Heart right ventricle (tissue), 16 donors: ENCODE measurements at regions of chr1 and their contacts with region 1.

Region 1: GRCh38 chr1:169106095-169106920 is at the start of gene ATP1B1:
- DNase-seq: peak; percentile 80 to 89
- ATAC-seq: peak; percentile 76 to 91 (median 86)
- H3K4me3 ChIP-seq: peak within 1 kb of the TSS; percentile 66 to 98 (median 91)
- H3K27ac ChIP-seq: peak within 1 kb of the TSS; percentile 86 to 98 (median 94)
- H3K4me1 ChIP-seq: peaks cover 0 to 63% (median 28%) of the 10 kb centered on the region in 9 donors
- H3K27me3 ChIP-seq: peaks cover 0 to 12% (median 0%) of the 10 kb centered on the region in 7 donors
- CTCF ChIP-seq: peak; percentile 44 to 80 (median 66)
- total RNA-seq, gene ATP1B1: 245 to 472 (median 272) TPM

Region 2: GRCh38 chr1:168609133-168609715 is 497.1 kb before region 1 on chr1:
- intact Hi-C with region 1: loop called in 6 of 10 experiments (anchors 2 to 10 kb)
- DNase-seq: peak; percentile 27 to 50
- ATAC-seq: peak; percentile 39 to 70 (median 64)
- H3K4me3 ChIP-seq: peak overlapping the region in 1 of 10 donors; percentile 9
- H3K27ac ChIP-seq: peak overlapping the region in 7 of 10 donors; percentile 37 to 64 (median 44)
- H3K4me1 ChIP-seq: peaks cover 3 to 34% (median 23%) of the 10 kb centered on the region in 9 donors
- H3K27me3 ChIP-seq: no peaks in the 10 kb centered on the region
- CTCF ChIP-seq: no peak

Region 3: DNA sequence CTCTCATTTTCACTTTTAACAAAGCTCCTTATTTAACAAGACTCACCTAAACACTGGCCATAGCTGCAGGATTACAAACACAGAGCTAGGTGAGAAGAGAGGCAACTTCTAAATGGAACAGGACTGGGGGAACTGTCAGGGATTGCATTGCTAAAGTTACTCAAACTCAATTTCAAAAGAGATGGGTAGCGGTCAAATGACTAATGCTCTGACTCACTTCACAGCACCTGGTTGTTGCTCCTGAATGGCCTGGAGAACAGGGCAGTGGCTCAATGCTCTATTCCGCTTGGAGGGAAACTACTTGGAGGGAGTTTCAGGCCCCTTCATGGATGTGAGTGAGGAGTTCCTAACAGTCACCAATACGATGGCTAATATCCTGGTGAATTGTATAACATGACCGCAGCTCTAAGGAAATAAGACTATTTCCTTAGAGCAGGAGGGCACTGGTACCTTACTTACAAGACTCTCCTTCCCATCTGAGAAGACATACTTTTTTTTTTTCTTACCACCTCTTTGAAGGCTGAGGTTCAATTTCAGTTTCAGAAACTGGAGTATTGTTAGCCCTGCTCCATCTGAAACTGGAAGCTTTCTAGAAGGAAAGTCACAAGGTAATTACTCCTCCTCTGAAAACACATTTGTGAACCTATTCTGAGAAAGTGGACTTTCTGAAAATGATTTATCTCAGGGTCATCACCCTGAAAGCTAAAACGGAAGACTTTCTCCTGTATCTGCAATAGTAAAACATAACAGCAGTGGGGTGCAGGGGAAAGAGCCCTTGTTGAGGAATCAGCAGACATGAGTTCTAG is 386.8 kb before region 1 on chr1:
- intact Hi-C with region 1: loop called in 3 of 10 experiments (anchors 5 to 10 kb)
- DNase-seq: no peak
- ATAC-seq: no peak
- H3K4me3 ChIP-seq: no peak overlapping the region
- H3K27ac ChIP-seq: peak overlapping the region in 1 of 10 donors; percentile 28
- H3K4me1 ChIP-seq: peaks cover 0 to 35% (median 4%) of the 10 kb centered on the region in 9 donors
- H3K27me3 ChIP-seq: no peaks in the 10 kb centered on the region
- CTCF ChIP-seq: no peak

Region 4: DNA sequence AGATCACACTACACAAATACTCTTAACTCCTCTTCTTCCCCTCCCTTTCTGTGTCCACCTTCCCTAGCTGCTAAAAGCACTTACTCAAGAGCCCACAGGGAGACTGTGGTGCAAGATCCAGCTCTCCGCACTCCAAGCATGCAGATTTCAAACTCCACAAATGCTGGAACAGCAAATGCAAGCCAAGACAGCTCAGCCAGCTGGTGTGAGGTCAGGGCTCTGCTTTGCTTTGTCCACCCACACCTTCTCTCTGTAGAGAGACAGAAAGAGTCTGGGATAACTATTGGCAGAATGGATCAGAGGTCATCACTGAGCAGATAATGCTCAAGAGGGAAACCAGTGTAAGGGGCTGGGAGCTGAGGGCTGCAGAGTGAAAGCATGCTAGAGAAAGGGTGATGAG is 332.1 kb before region 1 on chr1:
- intact Hi-C with region 1: loop called in 1 of 10 experiments (anchors 5 kb)
- DNase-seq: peak; percentile 56
- ATAC-seq: peak; percentile 93 to 100 (median 97)
- H3K4me3 ChIP-seq: no peak overlapping the region
- H3K27ac ChIP-seq: peak overlapping the region in 3 of 10 donors; percentile 0 to 30 (median 22)
- H3K4me1 ChIP-seq: peaks cover 0 to 25% (median 5%) of the 10 kb centered on the region in 9 donors
- H3K27me3 ChIP-seq: no peaks in the 10 kb centered on the region
- CTCF ChIP-seq: no peak

Region 5: GRCh38 chr1:168893359-168893801 is 212.9 kb before region 1 on chr1:
- intact Hi-C with region 1: loop called in 1 of 10 experiments (anchors 10 kb)
- DNase-seq: peak in 1 of 2 donors; percentile 13
- ATAC-seq: peak; percentile 85 to 98 (median 94)
- H3K4me3 ChIP-seq: no peak overlapping the region
- H3K27ac ChIP-seq: peak overlapping the region in 9 of 10 donors; percentile 18 to 79 (median 60)
- H3K4me1 ChIP-seq: peaks cover 0 to 12% (median 0%) of the 10 kb centered on the region in 9 donors
- H3K27me3 ChIP-seq: no peaks in the 10 kb centered on the region
- CTCF ChIP-seq: no peak

Region 6: GRCh38 chr1:169031566-169032201 is 74.6 kb before region 1 on chr1:
- intact Hi-C with region 1: no loop called
- DNase-seq: no peak
- ATAC-seq: no peak
- H3K4me3 ChIP-seq: no peak overlapping the region
- H3K27ac ChIP-seq: no peak overlapping the region
- H3K4me1 ChIP-seq: peaks cover 0 to 10% (median 0%) of the 10 kb centered on the region in 9 donors
- H3K27me3 ChIP-seq: no peaks in the 10 kb centered on the region
- CTCF ChIP-seq: no peak

Region 7: DNA sequence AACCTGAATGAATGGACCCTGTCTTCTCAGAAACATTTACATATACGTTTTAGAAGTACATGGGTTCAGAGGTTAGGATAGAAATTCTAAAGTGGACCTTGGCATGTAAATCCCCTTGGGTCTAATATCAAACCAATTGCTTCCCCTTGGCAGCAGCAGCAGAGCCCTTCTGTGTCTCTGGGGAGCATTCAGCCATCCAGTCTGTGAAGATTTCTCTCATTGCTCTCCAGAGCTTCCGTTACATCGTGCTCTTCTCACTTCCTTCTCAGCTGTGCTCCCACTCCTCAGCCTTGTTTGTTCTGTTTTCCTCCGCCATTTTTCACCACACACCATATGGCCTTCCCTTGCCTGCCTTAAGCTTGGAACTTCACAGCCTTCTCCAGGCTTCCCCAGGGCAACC is 61.3 kb before region 1 on chr1:
- intact Hi-C with region 1: no loop called
- DNase-seq: no peak
- ATAC-seq: peak in 2 of 8 donors; percentile 10 to 19
- H3K4me3 ChIP-seq: no peak overlapping the region
- H3K27ac ChIP-seq: peak overlapping the region in 1 of 10 donors; percentile 57
- H3K4me1 ChIP-seq: peaks cover 0 to 35% (median 11%) of the 10 kb centered on the region in 9 donors
- H3K27me3 ChIP-seq: no peaks in the 10 kb centered on the region
- CTCF ChIP-seq: no peak

Region 8: GRCh38 chr1:169193191-169193850 is 87.0 kb after region 1 on chr1:
- intact Hi-C with region 1: loop called in 1 of 10 experiments (anchors 5 kb)
- DNase-seq: peak; percentile 12 to 34
- ATAC-seq: peak; percentile 76 to 97 (median 88)
- H3K4me3 ChIP-seq: no peak overlapping the region
- H3K27ac ChIP-seq: peak overlapping the region in 2 of 10 donors; percentile 23 to 24
- H3K4me1 ChIP-seq: peaks cover 0 to 15% (median 8%) of the 10 kb centered on the region in 9 donors
- H3K27me3 ChIP-seq: no peaks in the 10 kb centered on the region
- CTCF ChIP-seq: peak in 6 of 9 donors; percentile 16 to 58 (median 46)